Activated CD4-positive, alpha-beta memory T cell treated with anti-CD3 and anti-CD28 coated beads for 36 hours (primary cell): ENCODE measurements at regions of chr2 and their contacts with region 1.

Region 1: DNA sequence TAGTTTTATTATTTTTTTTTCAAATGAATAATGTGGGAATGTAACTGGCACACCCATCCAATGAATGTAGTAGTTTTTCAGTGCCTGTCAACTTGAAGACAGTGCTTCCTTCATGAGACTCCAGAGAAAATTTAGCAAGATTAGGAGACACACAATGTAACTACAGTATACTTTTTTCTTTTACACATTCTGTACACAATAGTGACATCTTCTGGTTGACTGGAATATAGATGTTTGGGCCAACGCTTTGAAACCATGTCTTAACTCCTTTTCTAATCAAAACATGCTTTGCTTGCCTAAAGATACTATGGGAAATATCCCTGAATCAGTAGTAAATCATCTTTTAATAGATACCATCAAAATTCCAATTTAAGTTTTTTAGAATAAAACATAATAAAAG is 229.5 kb upstream of the ZC3H15 start:
- DNase-seq: no peak
- H3K4me3 Mint-ChIP-seq: no peak overlapping the region
- H3K27ac Mint-ChIP-seq: no peak overlapping the region
- H3K4me1 Mint-ChIP-seq: no peaks in the 10 kb centered on the region
- H3K27me3 Mint-ChIP-seq: no peaks in the 10 kb centered on the region

Region 2: GRCh38 chr2:185979546-185980071 is 276.9 kb before region 1 on chr2:
- CTCF ChIA-PET with region 1: no interaction called
- POLR2A ChIA-PET with region 1: no interaction called
- intact Hi-C with region 1: loop called (anchors 5 kb)
- DNase-seq: no peak
- H3K4me3 Mint-ChIP-seq: no peak overlapping the region
- H3K27ac Mint-ChIP-seq: no peak overlapping the region
- H3K4me1 Mint-ChIP-seq: no peaks in the 10 kb centered on the region
- H3K27me3 Mint-ChIP-seq: no peaks in the 10 kb centered on the region

Region 3: DNA sequence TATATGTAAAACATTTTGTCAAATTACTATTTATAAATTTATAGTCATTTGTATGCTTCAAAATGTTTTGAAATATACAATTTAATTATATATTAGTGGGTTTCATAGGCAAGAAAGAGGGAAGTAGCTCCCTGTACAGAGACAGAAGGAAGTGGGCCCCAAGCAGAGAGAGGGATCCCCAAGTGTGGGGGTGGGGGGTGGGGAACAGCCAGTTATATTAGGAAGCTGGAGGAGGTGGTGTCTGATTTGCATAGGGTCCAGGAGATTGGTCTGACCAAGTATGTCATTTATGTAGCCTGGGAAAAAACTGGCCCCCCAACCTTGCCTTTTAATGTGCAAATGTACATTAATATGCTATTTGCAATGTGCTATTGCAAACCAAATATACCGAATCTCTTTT is 669.0 kb after region 1 on chr2:
- CTCF ChIA-PET with region 1: no interaction called
- POLR2A ChIA-PET with region 1: no interaction called
- intact Hi-C with region 1: no loop called
- DNase-seq: no peak
- H3K4me3 Mint-ChIP-seq: no peak overlapping the region
- H3K27ac Mint-ChIP-seq: no peak overlapping the region
- H3K4me1 Mint-ChIP-seq: no peaks in the 10 kb centered on the region
- H3K27me3 Mint-ChIP-seq: no peaks in the 10 kb centered on the region